IMR-90 (cell line): ENCODE measurements at regions of chr9 and their contacts with region 1.

Region 1: DNA sequence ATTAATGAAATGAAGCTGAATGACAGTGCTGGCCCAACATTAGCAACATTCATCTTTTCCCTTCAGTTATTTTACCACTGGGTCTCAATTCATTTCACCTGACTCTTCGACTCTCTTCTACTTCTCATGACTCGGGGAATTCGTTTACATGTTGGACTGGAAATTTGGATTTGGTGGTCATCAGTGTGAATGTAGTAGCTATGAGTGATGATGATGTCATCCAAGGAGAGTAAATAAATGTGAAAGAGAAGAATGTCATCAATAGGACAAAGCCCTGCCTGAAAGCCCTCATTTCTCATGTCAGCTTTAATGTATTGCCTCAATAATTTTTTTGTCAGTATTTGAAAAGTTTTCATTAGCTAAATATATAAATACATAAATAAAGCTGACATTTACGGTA is 21.9 kb upstream of the CFAP95 start:
- DNase-seq: peak; percentile 62
- ATAC-seq: no peak
- H3K4me3 ChIP-seq: no peak overlapping the region
- H3K27ac ChIP-seq: no peak overlapping the region
- H3K4me1 ChIP-seq: no peaks in the 10 kb centered on the region; the same call in 1 of the 2 replicates
- H3K27me3 ChIP-seq: peaks cover 11% of the 10 kb centered on the region; the same call in 1 of the 2 replicates
- CTCF ChIP-seq: no peak
- POLR2A ChIP-seq: no peak
- RAD21 ChIP-seq: no peak

Region 2: DNA sequence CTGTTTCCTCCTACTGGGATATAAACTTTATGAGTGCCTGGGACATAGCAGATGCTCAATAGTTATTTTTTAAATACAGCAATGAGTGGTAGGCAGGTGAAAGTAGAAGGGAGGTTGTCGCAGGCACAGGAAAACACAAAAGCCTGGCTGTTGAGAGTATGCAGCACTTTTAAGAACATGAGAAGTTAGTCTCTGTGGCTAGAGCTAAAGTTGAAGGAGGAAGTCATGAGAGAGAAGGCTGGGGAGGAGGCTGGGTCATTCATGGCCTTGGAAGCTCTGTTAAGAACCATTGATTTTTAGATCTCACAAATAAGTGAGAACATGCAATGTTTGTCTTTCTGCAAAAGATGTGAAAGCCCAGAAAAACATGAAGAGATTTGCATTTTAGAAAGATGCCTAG is 911.5 kb before region 1 on chr9:
- CTCF ChIA-PET with region 1: no interaction called
- POLR2A ChIA-PET with region 1: no interaction called
- dilution Hi-C with region 1: no loop called
- in situ Hi-C with region 1: no loop called
- intact Hi-C with region 1: no loop called
- DNase-seq: no peak
- ATAC-seq: no peak
- H3K4me3 ChIP-seq: no peak overlapping the region
- H3K27ac ChIP-seq: no peak overlapping the region
- H3K4me1 ChIP-seq: no peaks in the 10 kb centered on the region
- H3K27me3 ChIP-seq: no peaks in the 10 kb centered on the region
- CTCF ChIP-seq: no peak
- POLR2A ChIP-seq: no peak
- RAD21 ChIP-seq: no peak

Region 3: GRCh38 chr9:69115621-69116020 is 683.1 kb before region 1 on chr9:
- CTCF ChIA-PET with region 1: no interaction called
- POLR2A ChIA-PET with region 1: no interaction called
- dilution Hi-C with region 1: no loop called
- in situ Hi-C with region 1: no loop called
- intact Hi-C with region 1: no loop called
- DNase-seq: no peak
- ATAC-seq: no peak
- H3K4me3 ChIP-seq: no peak overlapping the region
- H3K27ac ChIP-seq: no peak overlapping the region
- H3K4me1 ChIP-seq: no peaks in the 10 kb centered on the region
- H3K27me3 ChIP-seq: no peaks in the 10 kb centered on the region
- CTCF ChIP-seq: no peak
- POLR2A ChIP-seq: no peak
- RAD21 ChIP-seq: no peak

Region 4: DNA sequence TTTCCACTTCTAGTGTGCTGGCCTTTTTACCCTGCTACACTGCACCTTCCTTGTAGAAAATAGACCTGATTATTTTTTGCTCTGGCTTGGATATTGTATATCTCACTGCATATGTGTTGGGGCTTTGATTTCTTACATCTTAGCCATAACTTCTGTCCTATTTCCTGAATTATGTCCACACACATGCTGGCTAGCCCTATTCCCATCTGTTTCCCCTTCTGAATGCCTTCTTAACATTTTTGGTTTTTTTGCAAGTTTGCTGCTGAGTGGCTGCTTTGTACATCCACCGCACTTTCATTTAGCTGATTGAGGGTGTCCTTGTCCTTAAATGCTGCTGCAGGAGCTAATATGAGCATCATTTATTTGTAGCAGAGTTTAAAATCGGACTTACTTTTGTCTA is 48.7 kb after region 1 on chr9:
- CTCF ChIA-PET with region 1: no interaction called
- POLR2A ChIA-PET with region 1: no interaction called
- dilution Hi-C with region 1: no loop called
- in situ Hi-C with region 1: loop called (anchors 10 kb)
- intact Hi-C with region 1: loop called (anchors 5 kb)
- DNase-seq: no peak
- ATAC-seq: no peak
- H3K4me3 ChIP-seq: no peak overlapping the region
- H3K27ac ChIP-seq: no peak overlapping the region
- H3K4me1 ChIP-seq: no peaks in the 10 kb centered on the region
- H3K27me3 ChIP-seq: peaks cover 40% of the 10 kb centered on the region
- CTCF ChIP-seq: no peak
- POLR2A ChIP-seq: no peak
- RAD21 ChIP-seq: no peak

Region 5: DNA sequence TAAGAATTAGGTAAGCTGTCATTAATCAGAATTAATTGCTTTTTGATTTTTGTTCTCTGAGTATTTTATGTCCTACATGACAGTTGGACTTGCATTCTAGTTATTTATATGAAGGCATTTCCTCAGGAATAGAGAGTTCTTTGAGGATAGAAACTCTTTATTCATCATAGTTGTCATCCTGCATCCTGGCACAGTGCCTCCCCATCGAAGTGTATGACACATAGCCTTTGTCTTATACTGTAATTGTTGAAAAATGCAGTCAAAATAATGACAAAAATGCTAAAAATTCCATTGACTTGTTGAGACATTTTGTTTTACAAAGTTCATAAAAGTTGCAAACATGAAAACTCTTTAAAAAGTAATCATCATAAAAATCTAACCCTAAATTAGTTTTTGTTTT is 58.4 kb after region 1 on chr9:
- CTCF ChIA-PET with region 1: no interaction called
- POLR2A ChIA-PET with region 1: no interaction called
- dilution Hi-C with region 1: no loop called
- in situ Hi-C with region 1: loop called (anchors 10 kb)
- intact Hi-C with region 1: no loop called
- DNase-seq: peak; percentile 76
- ATAC-seq: no peak
- H3K4me3 ChIP-seq: no peak overlapping the region
- H3K27ac ChIP-seq: no peak overlapping the region
- H3K4me1 ChIP-seq: no peaks in the 10 kb centered on the region
- H3K27me3 ChIP-seq: no peaks in the 10 kb centered on the region
- CTCF ChIP-seq: no peak
- POLR2A ChIP-seq: no peak
- RAD21 ChIP-seq: no peak